Spleen (tissue), 13 donors: ENCODE measurements at regions of chr16 and their contacts with region 1.

Region 1: DNA sequence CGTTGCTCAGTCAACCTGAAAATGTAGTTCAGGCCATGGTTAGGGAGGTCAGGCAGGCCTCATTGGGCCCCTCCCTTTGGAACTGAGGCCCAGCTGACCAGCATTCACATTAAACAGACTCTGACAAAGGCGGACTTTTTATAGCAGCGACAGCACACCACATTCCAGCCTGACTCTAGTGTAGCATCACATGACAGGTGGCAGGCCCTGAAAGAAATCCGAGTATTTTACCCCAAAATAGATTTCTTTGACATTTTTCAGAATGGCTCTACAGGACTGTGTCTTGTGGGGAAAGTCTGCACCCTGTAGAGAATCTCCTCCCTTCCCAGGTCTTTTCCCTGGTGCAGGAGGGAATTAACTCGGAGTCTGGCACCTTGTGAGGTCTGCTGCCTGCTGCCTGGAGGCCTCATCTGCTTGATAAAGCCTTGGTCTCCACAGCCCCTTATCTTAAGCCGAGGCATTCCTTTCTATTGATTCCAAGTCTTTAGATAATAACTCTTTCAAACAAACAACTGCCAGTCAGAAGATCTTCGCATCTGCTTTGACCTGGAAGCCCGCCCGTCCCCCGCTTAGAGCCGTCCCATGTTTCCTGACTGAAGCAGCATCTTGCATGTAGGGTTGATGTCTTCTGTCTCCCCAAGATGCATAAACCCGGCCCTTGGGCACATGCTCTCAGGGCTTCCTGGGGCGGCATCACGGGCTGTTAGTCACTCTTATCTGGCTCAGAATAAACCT is 44.0 kb upstream of the CAPN15 start:
- DNase-seq: no peak
- H3K4me3 ChIP-seq: no peak overlapping the region
- H3K27ac ChIP-seq: no peak overlapping the region
- H3K4me1 ChIP-seq: no peaks in the 10 kb centered on the region
- H3K27me3 ChIP-seq: no peaks in the 10 kb centered on the region
- CTCF ChIP-seq: no peak
- POLR2A ChIP-seq: no peak

Region 2: GRCh38 chr16:414395-415169 is 68.9 kb before region 1 on chr16:
- intact Hi-C with region 1: no loop called
- DNase-seq: no peak
- H3K4me3 ChIP-seq: no peak overlapping the region
- H3K27ac ChIP-seq: no peak overlapping the region
- H3K4me1 ChIP-seq: no peaks in the 10 kb centered on the region
- H3K27me3 ChIP-seq: no peaks in the 10 kb centered on the region
- CTCF ChIP-seq: no peak
- POLR2A ChIP-seq: no peak

Region 3: GRCh38 chr16:425082-425718 is 58.3 kb before region 1 on chr16 and contains the start of gene RAB11FIP3:
- intact Hi-C with region 1: loop called (anchors 10 kb)
- DNase-seq: peak; percentile 95
- H3K4me3 ChIP-seq: peak within 1 kb of the TSS; percentile 60 to 87 (median 78)
- H3K27ac ChIP-seq: peak within 1 kb of the TSS; percentile 61 to 96 (median 90)
- H3K4me1 ChIP-seq: peaks cover 6 to 45% (median 33%) of the 10 kb centered on the region in 6 donors
- H3K27me3 ChIP-seq: peaks cover 0 to 14% (median 0%) of the 10 kb centered on the region in 7 donors
- CTCF ChIP-seq: peak in 6 of 11 experiments; percentile 9 to 35 (median 24)
- POLR2A ChIP-seq: peak in 1 of 3 donors; percentile 40
- total RNA-seq, gene RAB11FIP3: 33.8 to 52.7 (median 40.6) TPM